ENCODE measurements at regions of chr22 and their contacts with region 1.

Region 1: GRCh38 chr22:43346521-43346929 is 3.4 kb upstream of the SCUBE1 start:
- DNase-seq: peak; percentile 78
- H3K4me3 Mint-ChIP-seq: no peak overlapping the region
- H3K27ac Mint-ChIP-seq: no peak overlapping the region
- H3K4me1 Mint-ChIP-seq: peaks cover 17% of the 10 kb centered on the region
- H3K27me3 Mint-ChIP-seq: peaks cover 76% of the 10 kb centered on the region

Region 2: DNA sequence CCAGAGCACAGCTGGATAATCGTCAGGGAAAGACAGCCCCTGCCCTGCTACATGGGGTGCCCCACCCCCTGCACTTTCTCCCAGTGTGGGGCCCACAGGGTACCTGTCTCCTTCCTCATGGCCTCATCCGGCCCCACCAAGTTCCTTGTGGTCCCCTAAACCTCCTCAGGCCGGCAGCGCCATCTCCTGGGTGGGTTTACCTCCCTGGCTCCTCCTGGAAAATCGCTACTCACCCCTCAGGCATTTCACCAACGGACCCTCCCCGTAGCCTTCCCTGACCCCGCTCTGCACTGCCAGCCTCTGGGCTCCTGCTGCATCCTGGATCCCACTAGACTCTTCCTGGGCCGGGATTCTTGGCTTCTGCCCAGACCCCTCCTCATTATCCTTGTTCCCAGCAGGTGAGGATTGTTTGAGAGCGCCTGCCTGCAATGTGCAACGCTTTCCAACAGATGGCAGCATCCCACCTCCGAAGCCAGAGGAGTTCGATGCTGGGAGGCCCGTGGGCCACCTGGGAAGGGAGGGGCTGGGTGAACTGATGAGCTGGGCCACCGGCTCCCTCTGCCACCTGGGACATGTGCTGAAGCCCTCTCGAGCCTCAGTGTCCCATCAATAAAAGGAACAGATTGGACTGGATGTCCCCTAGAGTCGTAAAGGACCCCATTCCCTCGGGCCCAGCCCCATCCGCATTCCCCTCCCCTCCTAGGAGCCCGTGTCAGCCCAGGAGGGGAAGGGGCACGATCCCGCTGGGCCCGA is 115.4 kb before region 1 on chr22:
- CTCF ChIA-PET with region 1: interaction called, 125 read pairs
- DNase-seq: peak; percentile 80
- H3K4me3 Mint-ChIP-seq: no peak overlapping the region
- H3K27ac Mint-ChIP-seq: no peak overlapping the region
- H3K4me1 Mint-ChIP-seq: peaks cover 5% of the 10 kb centered on the region
- H3K27me3 Mint-ChIP-seq: peaks cover 23% of the 10 kb centered on the region

Region 3: GRCh38 chr22:43263645-43264514 is 82.6 kb before region 1 on chr22:
- CTCF ChIA-PET with region 1: interaction called, 197 read pairs
- DNase-seq: peak; percentile 85
- H3K4me3 Mint-ChIP-seq: peak overlapping the region; percentile 67
- H3K27ac Mint-ChIP-seq: peak overlapping the region; percentile 93
- H3K4me1 Mint-ChIP-seq: peaks cover 31% of the 10 kb centered on the region
- H3K27me3 Mint-ChIP-seq: peaks cover 47% of the 10 kb centered on the region

Region 4: DNA sequence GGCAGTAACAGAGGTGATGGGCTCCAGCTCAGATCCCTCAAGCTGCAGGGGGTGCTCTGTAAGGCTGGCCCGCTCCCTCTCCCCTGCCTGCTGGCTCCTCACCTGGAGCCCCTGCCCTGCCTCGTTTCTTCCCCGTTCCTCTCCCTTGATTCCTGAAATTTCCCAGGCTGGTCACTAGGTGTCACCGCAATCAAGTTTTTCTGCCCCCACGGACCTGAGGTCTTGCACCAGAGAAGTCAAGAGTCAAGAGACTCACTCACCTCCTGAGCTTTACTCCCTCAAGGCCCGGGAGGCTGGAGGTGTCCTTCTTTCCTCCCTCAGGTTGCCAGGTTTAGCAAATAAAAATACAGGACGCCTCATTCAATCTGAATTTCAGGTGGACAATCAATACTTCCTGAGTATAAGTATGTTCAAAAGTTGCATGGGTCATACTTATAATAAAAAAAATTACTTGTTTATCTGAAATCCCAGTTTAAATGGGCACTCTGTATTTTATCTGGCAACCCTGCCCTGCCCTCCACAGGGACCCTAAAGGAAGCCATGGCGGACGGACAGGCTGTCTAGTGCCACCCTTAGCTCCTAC is 72.5 kb before region 1 on chr22:
- CTCF ChIA-PET with region 1: interaction called, 197 read pairs
- DNase-seq: peak; percentile 63
- H3K4me3 Mint-ChIP-seq: no peak overlapping the region
- H3K27ac Mint-ChIP-seq: no peak overlapping the region
- H3K4me1 Mint-ChIP-seq: peaks cover 3% of the 10 kb centered on the region
- H3K27me3 Mint-ChIP-seq: peaks cover 28% of the 10 kb centered on the region

Region 5: DNA sequence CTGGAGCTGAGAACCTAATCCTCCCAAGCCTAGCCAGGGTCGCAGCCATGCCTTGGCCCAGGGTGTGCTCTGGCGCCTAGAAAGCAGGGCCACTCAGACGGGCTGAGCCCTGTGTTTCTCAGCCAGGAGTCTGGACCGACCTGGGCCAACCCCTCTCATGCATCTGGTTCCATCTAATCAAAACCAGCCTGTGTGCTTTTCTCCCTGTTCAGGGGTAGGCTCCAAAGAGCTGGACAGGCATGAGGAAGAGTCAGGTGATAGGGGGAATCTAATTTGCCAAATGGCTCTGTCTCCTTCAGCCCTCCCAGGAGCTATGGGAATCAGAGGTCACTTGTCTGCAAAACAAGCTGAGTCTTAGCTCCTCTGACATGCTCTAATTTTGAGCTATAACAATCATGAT is 59.1 kb before region 1 on chr22:
- CTCF ChIA-PET with region 1: interaction called, 19 read pairs
- DNase-seq: no peak
- H3K4me3 Mint-ChIP-seq: no peak overlapping the region
- H3K27ac Mint-ChIP-seq: no peak overlapping the region
- H3K4me1 Mint-ChIP-seq: peaks cover 17% of the 10 kb centered on the region
- H3K27me3 Mint-ChIP-seq: peaks cover 21% of the 10 kb centered on the region

Region 6: DNA sequence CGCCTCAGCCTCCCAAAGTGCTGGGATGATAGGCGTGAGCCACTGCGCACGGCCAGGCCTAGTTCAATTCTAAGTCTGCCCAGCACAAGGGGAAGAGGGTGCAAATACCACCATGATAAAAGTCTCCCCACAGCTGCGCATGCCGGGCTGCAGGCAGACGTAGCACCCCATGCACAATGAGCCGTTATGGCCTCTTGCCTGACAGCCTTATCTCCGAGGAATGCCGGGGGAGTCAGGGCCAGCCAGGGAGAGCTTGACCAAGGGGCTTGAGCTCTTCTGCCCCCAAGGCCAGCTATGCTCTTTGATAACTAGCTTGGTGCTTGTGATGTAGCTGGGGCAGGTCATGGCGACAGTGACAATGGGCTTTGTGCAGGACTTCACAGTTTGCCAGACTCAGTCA is 10.4 kb after region 1 on chr22:
- CTCF ChIA-PET with region 1: interaction called, 24 read pairs
- DNase-seq: no peak
- H3K4me3 Mint-ChIP-seq: no peak overlapping the region
- H3K27ac Mint-ChIP-seq: no peak overlapping the region
- H3K4me1 Mint-ChIP-seq: no peaks in the 10 kb centered on the region
- H3K27me3 Mint-ChIP-seq: peaks cover 18% of the 10 kb centered on the region

Region 7: DNA sequence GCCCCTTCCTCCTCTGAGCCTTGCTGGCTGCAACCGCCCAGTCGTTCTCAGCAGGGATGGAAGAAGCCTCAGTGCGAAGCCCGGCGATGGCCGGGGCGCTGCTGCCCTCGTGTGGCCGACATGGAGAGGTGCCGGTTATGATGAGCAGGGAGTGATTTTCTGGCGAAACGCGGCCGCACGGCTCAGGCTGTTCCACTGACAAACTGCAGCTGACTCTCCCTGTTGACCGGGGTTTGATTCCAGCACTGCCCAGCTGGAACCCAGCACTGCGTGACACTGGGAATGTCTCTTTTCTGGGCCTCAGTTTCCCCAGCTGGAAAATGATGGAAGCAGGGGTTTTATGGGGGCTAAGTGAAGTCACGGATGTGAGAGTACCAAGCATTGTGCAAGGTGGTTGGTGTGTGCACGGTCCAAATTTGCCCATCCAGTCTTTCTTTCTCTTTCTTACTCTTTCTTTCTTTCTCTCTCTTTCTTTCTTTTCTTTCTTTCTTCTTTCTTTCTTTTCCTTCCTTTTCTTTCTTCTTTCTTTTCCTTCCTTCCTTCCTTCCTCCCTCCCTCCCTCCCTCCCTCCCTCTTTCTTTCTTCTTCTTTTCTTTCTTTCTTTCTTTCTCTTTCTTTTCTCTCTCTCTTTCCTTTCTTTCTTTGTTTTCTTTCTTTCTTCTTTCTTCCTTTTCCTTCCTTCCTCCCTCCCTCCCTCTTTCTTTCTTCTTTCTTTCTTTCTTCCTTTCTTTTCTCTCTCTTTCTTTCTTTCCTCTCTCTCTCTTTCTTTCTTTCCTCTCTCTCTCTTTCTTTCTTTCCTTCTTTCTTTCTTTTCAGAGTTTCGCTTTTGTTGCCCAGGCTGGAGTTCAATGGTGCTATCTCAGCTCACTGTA is 39.5 kb after region 1 on chr22:
- CTCF ChIA-PET with region 1: interaction called, 15 read pairs
- DNase-seq: peak; percentile 78
- H3K4me3 Mint-ChIP-seq: no peak overlapping the region
- H3K27ac Mint-ChIP-seq: no peak overlapping the region
- H3K4me1 Mint-ChIP-seq: peaks cover 12% of the 10 kb centered on the region
- H3K27me3 Mint-ChIP-seq: peaks cover 61% of the 10 kb centered on the region